Esophagus muscularis mucosa (tissue), 4 donors: ENCODE measurements at regions of chr20 and their contacts with region 1.

Region 1: GRCh38 chr20:2692036-2692885 is at the start of gene EBF4:
- DNase-seq: no peak
- H3K4me3 ChIP-seq: peak within 1 kb of the TSS; percentile 70 to 82 (median 70)
- H3K27ac ChIP-seq: peak within 1 kb of the TSS; percentile 86 to 95 (median 93)
- H3K4me1 ChIP-seq: peaks cover 8 to 31% (median 29%) of the 10 kb centered on the region in 4 donors
- H3K27me3 ChIP-seq: peaks cover 0 to 12% (median 0%) of the 10 kb centered on the region in 4 donors
- CTCF ChIP-seq: no peak
- EP300 ChIP-seq: no peak
- POLR2A ChIP-seq: no peak
- total RNA-seq, gene EBF4: 23.7 to 46.7 (median 30.1) TPM

Region 2: GRCh38 chr20:2507464-2507863 is 184.8 kb before region 1 on chr20:
- intact Hi-C with region 1: no loop called
- DNase-seq: peak; percentile 26
- H3K4me3 ChIP-seq: peak overlapping the region; percentile 78 to 96 (median 86)
- H3K27ac ChIP-seq: peak overlapping the region in 2 of 4 donors; percentile 85 to 88
- H3K4me1 ChIP-seq: peaks cover 10 to 24% (median 17%) of the 10 kb centered on the region in 4 donors
- H3K27me3 ChIP-seq: no peaks in the 10 kb centered on the region
- CTCF ChIP-seq: no peak
- EP300 ChIP-seq: no peak
- POLR2A ChIP-seq: no peak

Region 3: GRCh38 chr20:2651772-2652723 is 40.2 kb before region 1 on chr20 and contains the start of gene NOP56:
- intact Hi-C with region 1: loop called (anchors 2 kb)
- DNase-seq: peak; percentile 97
- H3K4me3 ChIP-seq: peak within 1 kb of the TSS; percentile 87 to 92 (median 90)
- H3K27ac ChIP-seq: peak within 1 kb of the TSS; percentile 85 to 98 (median 92)
- H3K4me1 ChIP-seq: peaks cover 16 to 36% (median 30%) of the 10 kb centered on the region in 4 donors
- H3K27me3 ChIP-seq: no peaks in the 10 kb centered on the region
- CTCF ChIP-seq: no peak
- EP300 ChIP-seq: no peak
- POLR2A ChIP-seq: peak; percentile 39
- total RNA-seq, gene NOP56: 31.6 to 96.4 (median 62.8) TPM

Region 4: DNA sequence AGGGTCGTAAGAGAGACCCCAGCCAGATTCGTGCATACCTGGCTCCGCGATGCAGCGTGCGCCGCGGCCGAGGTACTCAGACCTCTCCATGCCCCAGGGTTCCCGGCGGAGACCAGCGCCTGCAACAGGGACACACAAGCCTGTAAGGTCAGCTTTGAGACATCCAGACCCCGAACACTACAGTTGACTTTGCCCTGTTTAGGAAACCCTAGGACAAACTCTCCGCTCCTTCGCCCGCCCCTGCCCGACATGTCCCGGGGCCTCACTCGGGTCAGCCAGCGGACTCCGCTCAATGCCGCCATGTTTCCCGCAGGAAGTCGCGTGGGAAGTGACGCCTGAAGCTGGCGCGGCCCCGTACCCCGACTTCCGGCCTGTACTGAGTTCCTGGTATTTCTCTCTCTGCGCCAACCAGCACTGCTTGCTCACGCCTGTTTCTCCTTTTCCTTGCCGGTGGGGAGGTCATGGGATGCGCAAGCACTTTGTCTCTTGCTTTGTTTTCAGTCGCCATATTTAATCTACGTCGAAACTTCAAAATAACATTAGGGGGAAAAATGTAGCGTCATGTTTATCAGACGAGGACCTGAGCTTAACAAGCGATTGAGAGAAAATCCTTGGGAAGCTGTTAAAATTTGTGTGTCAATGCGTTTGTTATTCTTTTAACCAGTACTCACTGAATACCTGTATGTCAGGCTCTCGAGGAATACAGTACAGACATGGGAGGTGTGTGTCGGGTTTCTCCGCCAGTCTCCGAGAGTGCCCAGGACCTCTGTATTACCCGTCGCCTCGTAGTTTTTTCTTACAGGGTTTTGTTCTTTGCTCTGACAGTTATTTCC is 28.2 kb before region 1 on chr20 and contains the start of gene IDH3B:
- intact Hi-C with region 1: loop called (anchors 2 kb)
- DNase-seq: peak; percentile 99
- H3K4me3 ChIP-seq: peak within 1 kb of the TSS; percentile 78 to 86 (median 81)
- H3K27ac ChIP-seq: peak within 1 kb of the TSS; percentile 85 to 90 (median 89)
- H3K4me1 ChIP-seq: peaks cover 17 to 21% (median 20%) of the 10 kb centered on the region in 4 donors
- H3K27me3 ChIP-seq: no peaks in the 10 kb centered on the region
- CTCF ChIP-seq: no peak
- EP300 ChIP-seq: no peak
- POLR2A ChIP-seq: no peak
- total RNA-seq, gene IDH3B: 115 to 122 (median 118) TPM

Region 5: GRCh38 chr20:2752567-2753460 is 60.6 kb after region 1 on chr20:
- intact Hi-C with region 1: loop called (anchors 5 kb)
- DNase-seq: no peak
- H3K4me3 ChIP-seq: peak overlapping the region; percentile 45 to 64 (median 49)
- H3K27ac ChIP-seq: no peak overlapping the region
- H3K4me1 ChIP-seq: peaks cover 20 to 40% (median 36%) of the 10 kb centered on the region in 4 donors
- H3K27me3 ChIP-seq: peaks cover 0 to 86% (median 35%) of the 10 kb centered on the region in 4 donors
- CTCF ChIP-seq: peak; percentile 34 to 61 (median 35)
- EP300 ChIP-seq: no peak
- POLR2A ChIP-seq: no peak

Region 6: GRCh38 chr20:2840138-2840966 is 148.1 kb after region 1 on chr20 and contains the starts of genes PCED1A and VPS16:
- intact Hi-C with region 1: loop called (anchors 10 kb)
- DNase-seq: peak; percentile 96
- H3K4me3 ChIP-seq: peak within 1 kb of the TSS; percentile 84 to 96 (median 93)
- H3K27ac ChIP-seq: peak within 1 kb of the TSS; percentile 89 to 94 (median 91)
- H3K4me1 ChIP-seq: peaks cover 15 to 32% (median 25%) of the 10 kb centered on the region in 4 donors
- H3K27me3 ChIP-seq: no peaks in the 10 kb centered on the region
- CTCF ChIP-seq: no peak
- EP300 ChIP-seq: no peak
- POLR2A ChIP-seq: no peak
- total RNA-seq, gene PCED1A: 15.1 to 24.1 (median 22.5) TPM
- total RNA-seq, gene VPS16: 22.0 to 37.5 (median 30.2) TPM